GM12878 (cell line): ENCODE measurements at regions of chr18 and their contacts with region 1.

Region 1: GRCh38 chr18:44747157-44747556 is 66.5 kb downstream of the SETBP1 start:
- DNase-seq: no peak
- ATAC-seq: peak; percentile 14; the same call in 2 of the 3 replicates
- H3K4me3 ChIP-seq: no peak overlapping the region
- H3K27ac ChIP-seq: no peak overlapping the region
- H3K4me1 ChIP-seq: peaks cover 33% of the 10 kb centered on the region
- H3K27me3 ChIP-seq: no peaks in the 10 kb centered on the region
- CTCF ChIP-seq: no peak
- EP300 ChIP-seq: no peak
- POLR2A ChIP-seq: no peak
- RAD21 ChIP-seq: no peak

Region 2: GRCh38 chr18:43465483-43465882 is 1281.7 kb before region 1 on chr18:
- CTCF ChIA-PET with region 1: no interaction called
- POLR2A ChIA-PET with region 1: no interaction called
- RAD21 ChIA-PET with region 1: no interaction called
- SMC1A ChIA-PET with region 1: no interaction called
- in situ Hi-C with region 1: no loop called
- intact Hi-C with region 1: no loop called
- DNase-seq: no peak
- ATAC-seq: no peak
- H3K4me3 ChIP-seq: no peak overlapping the region
- H3K27ac ChIP-seq: no peak overlapping the region
- H3K4me1 ChIP-seq: no peaks in the 10 kb centered on the region
- H3K27me3 ChIP-seq: no peaks in the 10 kb centered on the region
- CTCF ChIP-seq: no peak
- EP300 ChIP-seq: no peak
- POLR2A ChIP-seq: no peak
- RAD21 ChIP-seq: no peak

Region 3: GRCh38 chr18:44733069-44733753 is 13.9 kb before region 1 on chr18:
- CTCF ChIA-PET with region 1: interaction called, 7 read pairs
- POLR2A ChIA-PET with region 1: interaction called, 8 read pairs
- RAD21 ChIA-PET with region 1: interaction called, 3 read pairs
- SMC1A ChIA-PET with region 1: interaction called, 11 read pairs
- in situ Hi-C with region 1: no loop called
- intact Hi-C with region 1: no loop called
- DNase-seq: no peak
- ATAC-seq: peak; percentile 16; the same call in 1 of the 3 replicates
- H3K4me3 ChIP-seq: no peak overlapping the region
- H3K27ac ChIP-seq: no peak overlapping the region
- H3K4me1 ChIP-seq: peaks cover 41% of the 10 kb centered on the region
- H3K27me3 ChIP-seq: no peaks in the 10 kb centered on the region
- CTCF ChIP-seq: no peak
- EP300 ChIP-seq: no peak
- POLR2A ChIP-seq: no peak
- RAD21 ChIP-seq: no peak

Region 4: DNA sequence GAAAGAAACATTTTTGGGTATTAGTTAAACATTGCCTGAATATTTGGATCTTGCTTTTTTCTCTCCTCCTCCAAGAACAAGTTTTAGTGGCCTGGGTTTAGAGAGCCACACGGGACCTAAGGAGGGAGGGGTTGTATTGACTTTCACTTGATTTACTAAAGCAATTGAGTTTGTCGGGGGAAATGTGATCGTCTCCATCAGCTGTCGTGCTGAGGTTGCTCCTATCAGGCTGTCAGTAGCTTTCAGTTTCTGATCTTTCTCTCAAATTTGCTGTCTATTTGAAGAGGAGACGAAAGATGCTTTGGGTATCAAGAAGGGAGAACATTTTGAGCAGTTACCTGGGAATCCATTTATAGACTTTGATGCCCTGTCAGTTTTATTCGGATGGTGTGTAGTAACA is 39.5 kb after region 1 on chr18:
- CTCF ChIA-PET with region 1: no interaction called
- POLR2A ChIA-PET with region 1: no interaction called
- RAD21 ChIA-PET with region 1: no interaction called
- SMC1A ChIA-PET with region 1: no interaction called
- in situ Hi-C with region 1: no loop called
- intact Hi-C with region 1: no loop called
- DNase-seq: no peak
- ATAC-seq: peak; percentile 85
- H3K4me3 ChIP-seq: peak overlapping the region; percentile 41; the same call in 1 of the 2 replicates
- H3K27ac ChIP-seq: peak overlapping the region; percentile 64
- H3K4me1 ChIP-seq: peaks cover 20% of the 10 kb centered on the region
- H3K27me3 ChIP-seq: no peaks in the 10 kb centered on the region
- CTCF ChIP-seq: no peak
- EP300 ChIP-seq: no peak
- POLR2A ChIP-seq: no peak
- RAD21 ChIP-seq: no peak